ENCODE measurements at regions of chr2 and their contacts with region 1.

Region 1: GRCh38 chr2:10434886-10435819 is 13.0 kb downstream of the ODC1 start:
- DNase-seq: peak; percentile 70 to 80 (median 75)
- ATAC-seq: peak; percentile 82
- H3K4me3 ChIP-seq: no peak overlapping the region
- H3K27ac ChIP-seq: no peak overlapping the region
- H3K4me1 ChIP-seq: peaks cover 13% of the 10 kb centered on the region
- H3K27me3 ChIP-seq: no peaks in the 10 kb centered on the region
- CTCF ChIP-seq: peak; percentile 95 to 97 (median 96)
- POLR2A ChIP-seq: no peak

Region 2: GRCh38 chr2:9799665-9800632 is 635.2 kb before region 1 on chr2:
- intact Hi-C with region 1: loop called (anchors 10 kb)
- DNase-seq: peak; percentile 82 to 90 (median 86)
- ATAC-seq: peak; percentile 79
- H3K4me3 ChIP-seq: no peak overlapping the region
- H3K27ac ChIP-seq: no peak overlapping the region
- H3K4me1 ChIP-seq: peaks cover 31% of the 10 kb centered on the region
- H3K27me3 ChIP-seq: no peaks in the 10 kb centered on the region
- CTCF ChIP-seq: peak; percentile 92 to 98 (median 94)
- POLR2A ChIP-seq: no peak

Region 3: DNA sequence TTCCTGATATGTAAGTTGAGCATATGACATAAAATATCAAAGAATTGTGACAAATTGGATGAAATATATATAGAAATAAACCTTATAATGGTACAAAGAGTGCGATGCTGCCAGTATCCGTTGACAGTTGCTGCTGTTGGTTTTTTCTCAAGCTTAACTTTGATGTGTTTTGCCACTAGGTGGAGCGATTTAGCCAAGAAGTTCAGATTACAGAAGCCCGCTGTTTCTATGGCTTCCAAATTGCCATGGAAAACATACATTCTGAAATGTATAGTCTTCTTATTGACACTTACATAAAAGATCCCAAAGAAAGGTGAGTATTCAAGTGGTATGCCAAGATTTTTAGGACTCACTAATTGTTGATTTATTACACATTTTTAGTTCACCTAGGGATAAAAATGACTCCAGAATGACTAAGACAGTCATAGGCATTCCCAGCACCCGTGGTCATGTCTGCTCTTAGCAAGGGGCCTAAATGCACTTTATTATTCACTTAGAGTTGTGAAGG is 310.6 kb before region 1 on chr2:
- intact Hi-C with region 1: loop called (anchors 5 kb)
- DNase-seq: peak; percentile 46 to 68 (median 52)
- ATAC-seq: no peak
- H3K4me3 ChIP-seq: no peak overlapping the region
- H3K27ac ChIP-seq: no peak overlapping the region
- H3K4me1 ChIP-seq: peaks cover 37% of the 10 kb centered on the region
- H3K27me3 ChIP-seq: no peaks in the 10 kb centered on the region
- CTCF ChIP-seq: peak; percentile 56 to 75 (median 71)
- POLR2A ChIP-seq: no peak

Region 4: DNA sequence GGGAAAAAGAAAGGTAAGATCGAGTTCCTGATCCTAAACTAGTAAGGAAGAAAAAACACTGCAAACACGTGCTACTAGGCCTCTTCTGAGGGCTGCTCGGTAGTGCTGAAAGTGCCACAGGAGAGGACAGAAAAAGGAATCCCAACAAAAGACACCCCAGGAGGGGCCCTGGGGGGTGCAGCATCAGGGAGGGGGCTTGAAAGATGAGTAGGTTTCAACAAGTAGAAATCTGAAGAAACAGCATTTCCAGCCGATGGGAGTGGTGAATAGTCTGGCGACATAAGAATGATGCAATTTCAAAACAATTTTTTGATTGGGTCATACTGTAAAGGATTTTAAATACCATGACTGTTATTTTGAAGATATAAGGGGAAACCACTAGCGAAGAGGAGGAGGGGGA is 156.1 kb after region 1 on chr2:
- intact Hi-C with region 1: no loop called
- DNase-seq: no peak
- ATAC-seq: no peak
- H3K4me3 ChIP-seq: no peak overlapping the region
- H3K27ac ChIP-seq: no peak overlapping the region
- H3K4me1 ChIP-seq: no peaks in the 10 kb centered on the region
- H3K27me3 ChIP-seq: no peaks in the 10 kb centered on the region
- CTCF ChIP-seq: no peak
- POLR2A ChIP-seq: no peak

Region 5: DNA sequence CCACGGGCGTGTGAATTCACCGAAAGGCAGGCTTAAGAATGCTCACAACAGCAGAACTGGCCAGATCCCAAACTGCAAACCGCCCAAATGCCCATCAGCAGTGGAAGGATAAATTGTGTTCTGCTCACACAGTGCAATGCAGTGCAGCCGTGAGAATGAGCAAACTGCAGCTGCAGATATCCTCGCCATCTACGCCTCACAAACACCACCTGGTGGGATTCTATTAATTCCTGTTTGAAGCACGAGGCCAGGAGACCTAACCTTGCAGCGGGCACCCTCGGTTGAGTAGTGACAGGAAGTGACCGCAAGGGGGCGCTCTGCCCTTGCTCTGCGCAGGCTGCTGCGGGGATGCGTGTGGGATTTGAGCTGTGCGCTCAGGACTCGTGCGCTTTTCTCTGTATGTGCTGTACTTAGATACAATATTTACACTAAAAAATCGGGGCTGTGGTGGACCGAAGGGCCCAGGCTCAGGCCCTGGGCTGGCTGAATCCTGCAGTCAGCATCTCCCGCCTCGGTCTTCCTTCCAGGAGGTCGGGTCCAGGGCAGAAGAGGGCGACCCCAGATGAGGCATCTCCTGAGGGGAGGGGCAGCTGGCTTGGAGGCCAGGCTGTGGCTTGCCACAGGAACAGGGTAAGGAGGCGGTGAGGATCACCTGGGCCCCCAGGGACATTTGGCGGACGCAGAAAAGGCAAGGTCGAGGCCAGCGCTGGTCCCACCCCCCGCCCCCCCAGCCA is 397.2 kb after region 1 on chr2:
- intact Hi-C with region 1: no loop called
- DNase-seq: peak; percentile 82 to 86 (median 83)
- ATAC-seq: peak; percentile 84
- H3K4me3 ChIP-seq: no peak overlapping the region
- H3K27ac ChIP-seq: no peak overlapping the region
- H3K4me1 ChIP-seq: peaks cover 27% of the 10 kb centered on the region
- H3K27me3 ChIP-seq: no peaks in the 10 kb centered on the region
- CTCF ChIP-seq: peak; percentile 91 to 98 (median 92)
- POLR2A ChIP-seq: no peak